HEK293 (cell line): ENCODE measurements at regions of chr11 and their contacts with region 1.

Region 1: DNA sequence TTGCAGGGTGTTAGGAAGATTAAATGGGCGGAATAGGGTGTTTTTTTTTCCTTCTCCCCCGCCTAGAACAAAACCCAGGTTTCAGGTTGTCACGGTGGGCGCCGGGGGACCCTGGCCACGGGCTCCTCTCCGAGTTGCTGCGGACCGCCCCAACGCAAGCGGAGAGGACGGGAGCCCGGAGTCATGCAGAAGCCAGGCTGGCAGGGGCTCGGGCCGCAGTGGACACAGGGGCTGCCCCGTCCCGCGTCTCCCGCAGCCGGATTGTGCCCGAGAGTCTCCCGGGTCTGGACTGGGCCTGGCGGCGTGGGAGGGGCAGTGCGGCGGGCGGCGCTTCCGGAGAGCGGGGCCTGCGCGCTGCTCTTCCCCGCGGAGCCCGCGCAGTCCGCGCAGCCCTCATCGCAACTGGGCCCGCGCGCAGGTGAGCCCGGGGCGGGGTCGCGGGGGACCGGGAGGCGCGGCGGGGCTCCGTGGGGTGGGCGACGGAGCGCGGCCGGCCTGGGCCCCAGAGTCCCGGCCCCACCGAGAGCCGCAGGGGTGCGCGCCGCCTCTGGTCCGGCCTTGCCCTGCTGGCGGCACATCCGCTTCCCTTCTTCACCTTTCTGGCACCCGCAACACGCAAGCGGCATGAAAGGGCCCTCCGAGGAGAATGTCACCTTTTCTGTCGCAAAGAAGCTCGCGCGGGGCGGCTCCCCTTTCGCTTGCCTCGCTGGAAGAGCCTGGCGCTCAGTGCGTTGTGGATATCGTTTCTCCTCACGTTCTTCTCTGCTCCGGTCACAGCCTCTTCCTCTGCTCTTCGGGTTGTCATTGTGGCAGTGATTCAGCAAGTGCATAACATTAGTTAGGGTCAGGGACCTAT is at the start of gene TIRAP:
- H3K4me3 ChIP-seq: peak within 1 kb of the TSS; percentile 65
- H3K27ac ChIP-seq: peak within 1 kb of the TSS; percentile 68
- H3K4me1 ChIP-seq: no peaks in the 10 kb centered on the region; the same call in 1 of the 2 replicates
- CTCF ChIP-seq: no peak

Region 2: DNA sequence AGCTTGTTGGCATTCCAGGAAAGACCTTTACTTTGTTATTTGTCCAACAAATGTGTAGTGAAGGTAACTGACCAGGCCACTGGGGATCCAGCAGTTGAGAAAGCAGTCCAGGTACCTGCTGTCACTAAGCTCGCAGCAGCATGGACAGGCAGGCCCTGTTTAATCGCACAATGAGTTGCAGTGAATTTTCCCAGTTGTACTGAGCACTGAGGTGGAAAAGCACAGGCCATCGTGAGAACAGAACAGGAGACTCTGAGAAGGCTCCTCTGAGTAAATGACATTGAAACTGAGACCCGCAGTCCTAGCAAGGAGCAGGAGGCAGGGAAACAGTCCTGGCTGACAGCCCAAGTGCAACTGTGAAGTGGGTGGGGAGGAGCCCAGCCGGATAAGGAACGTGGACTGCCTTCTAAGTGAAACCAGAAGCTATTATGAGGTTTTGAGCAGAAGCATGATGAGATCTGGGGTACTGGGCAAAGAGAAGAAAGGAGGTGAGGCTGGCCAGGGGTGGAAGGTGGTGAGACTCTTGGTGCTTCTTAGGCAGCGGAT is 180.5 kb before region 1 on chr11:
- CTCF ChIA-PET with region 1: no interaction called
- POLR2A ChIA-PET with region 1: no interaction called
- H3K4me3 ChIP-seq: no peak overlapping the region
- H3K27ac ChIP-seq: peak overlapping the region; percentile 57
- H3K4me1 ChIP-seq: peaks cover 14% of the 10 kb centered on the region
- CTCF ChIP-seq: no peak

Region 3: GRCh38 chr11:126268708-126269579 is 14.0 kb before region 1 on chr11 and contains the starts of genes FOXRED1 and SRPRA:
- CTCF ChIA-PET with region 1: interaction called, 3 read pairs
- POLR2A ChIA-PET with region 1: interaction called, 24 read pairs
- H3K4me3 ChIP-seq: peak within 1 kb of the TSS; percentile 94
- H3K27ac ChIP-seq: peak within 1 kb of the TSS; percentile 65; the same call in 1 of the 2 replicates
- H3K4me1 ChIP-seq: no peaks in the 10 kb centered on the region
- CTCF ChIP-seq: no peak